Dendritic cell treated with granulocyte-macrophage colony-stimulating factor and Interleukin-4, amounts not matched to agents 40 ng/mL and 50 ng/mL, for 4 days (primary cell): ENCODE measurements at regions of chr5 and their contacts with region 1.

Region 1: DNA sequence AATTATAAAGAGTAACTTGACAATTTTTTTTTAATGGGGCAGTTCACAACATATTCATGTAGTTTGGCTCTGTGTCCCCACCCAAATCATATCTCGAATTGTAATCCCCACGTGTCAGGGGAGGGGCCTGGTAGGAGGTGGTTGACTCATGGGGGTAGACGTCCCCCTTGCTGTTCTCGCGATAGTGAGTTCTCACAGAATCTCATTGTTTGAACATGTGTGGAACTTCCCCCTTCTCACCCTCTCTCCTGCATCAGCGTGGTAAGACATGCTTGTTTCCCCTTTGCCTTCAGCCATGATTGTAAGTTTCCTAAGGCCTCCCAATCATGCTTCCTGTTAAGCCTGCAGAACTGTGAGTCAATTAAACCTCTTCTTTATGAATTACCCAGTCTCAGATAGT is 40.7 kb downstream of the FBXW11 start:
- H3K4me3 Mint-ChIP-seq: no peak overlapping the region
- H3K27ac Mint-ChIP-seq: peak overlapping the region; percentile 43
- H3K4me1 Mint-ChIP-seq: peaks cover 41% of the 10 kb centered on the region
- H3K27me3 Mint-ChIP-seq: no peaks in the 10 kb centered on the region

Region 2: GRCh38 chr5:172006321-172007174 is 40.8 kb after region 1 on chr5 and contains the start of gene FBXW11:
- intact Hi-C with region 1: loop called (anchors 5 kb)
- H3K4me3 Mint-ChIP-seq: peak within 1 kb of the TSS; percentile 85
- H3K27ac Mint-ChIP-seq: peak within 1 kb of the TSS; percentile 93
- H3K4me1 Mint-ChIP-seq: peaks cover 51% of the 10 kb centered on the region
- H3K27me3 Mint-ChIP-seq: no peaks in the 10 kb centered on the region